HepG2 (cell line): ENCODE measurements at regions of chr11 and their contacts with region 1.

Region 1: GRCh38 chr11:73965076-73965860 is 14.4 kb downstream of the DNAJB13 start:
- DNase-seq: no peak
- ATAC-seq: no peak
- H3K4me3 ChIP-seq: no peak overlapping the region
- H3K27ac ChIP-seq: no peak overlapping the region
- H3K4me1 ChIP-seq: peaks cover 20% of the 10 kb centered on the region
- H3K27me3 ChIP-seq: no peaks in the 10 kb centered on the region
- CTCF ChIP-seq: no peak
- EP300 ChIP-seq: no peak
- POLR2A ChIP-seq: no peak
- RAD21 ChIP-seq: no peak

Region 2: GRCh38 chr11:74004759-74005615 is 39.7 kb after region 1 on chr11:
- CTCF ChIA-PET with region 1: no interaction called
- POLR2A ChIA-PET with region 1: no interaction called
- in situ Hi-C with region 1: no loop called
- intact Hi-C with region 1: no loop called
- DNase-seq: no peak
- ATAC-seq: peak; percentile 43
- H3K4me3 ChIP-seq: no peak overlapping the region
- H3K27ac ChIP-seq: no peak overlapping the region
- H3K4me1 ChIP-seq: peaks cover 48% of the 10 kb centered on the region
- H3K27me3 ChIP-seq: no peaks in the 10 kb centered on the region
- CTCF ChIP-seq: no peak
- EP300 ChIP-seq: no peak
- POLR2A ChIP-seq: no peak
- RAD21 ChIP-seq: no peak

Region 3: GRCh38 chr11:74090701-74091100 is 125.4 kb after region 1 on chr11:
- CTCF ChIA-PET with region 1: interaction called, 3 read pairs
- POLR2A ChIA-PET with region 1: no interaction called
- in situ Hi-C with region 1: loop called (anchors 10 kb)
- intact Hi-C with region 1: loop called (anchors 1 kb)
- DNase-seq: peak; percentile 12
- ATAC-seq: peak; percentile 53; the same call in 2 of the 3 replicates
- H3K4me3 ChIP-seq: no peak overlapping the region
- H3K27ac ChIP-seq: no peak overlapping the region
- H3K4me1 ChIP-seq: peaks cover 5% of the 10 kb centered on the region
- H3K27me3 ChIP-seq: no peaks in the 10 kb centered on the region
- CTCF ChIP-seq: peak; percentile 67
- EP300 ChIP-seq: no peak
- POLR2A ChIP-seq: no peak
- RAD21 ChIP-seq: no peak

Region 4: DNA sequence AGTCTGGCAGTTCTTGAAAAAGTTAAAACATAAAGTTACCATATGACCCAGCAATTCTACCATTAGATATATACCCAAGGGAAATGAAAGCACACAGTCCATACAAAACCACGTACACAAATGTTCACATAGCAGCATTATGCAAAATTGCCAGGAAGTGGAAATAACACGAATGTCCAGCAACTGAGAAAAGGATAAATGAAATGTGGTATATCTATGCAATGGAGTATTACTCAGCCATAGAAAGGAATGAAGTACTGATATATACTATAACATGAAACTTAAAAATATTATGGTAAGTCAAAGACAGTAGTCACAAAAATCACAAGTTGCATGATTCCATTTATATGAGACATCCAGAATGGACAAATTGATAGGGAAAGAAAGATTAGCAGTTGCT is 147.6 kb after region 1 on chr11:
- CTCF ChIA-PET with region 1: no interaction called
- POLR2A ChIA-PET with region 1: no interaction called
- in situ Hi-C with region 1: no loop called
- intact Hi-C with region 1: no loop called
- DNase-seq: no peak
- ATAC-seq: no peak
- H3K4me3 ChIP-seq: no peak overlapping the region
- H3K27ac ChIP-seq: no peak overlapping the region
- H3K4me1 ChIP-seq: no peaks in the 10 kb centered on the region
- H3K27me3 ChIP-seq: no peaks in the 10 kb centered on the region
- CTCF ChIP-seq: no peak
- EP300 ChIP-seq: no peak
- POLR2A ChIP-seq: no peak
- RAD21 ChIP-seq: no peak

Region 5: GRCh38 chr11:74138572-74138971 is 173.3 kb after region 1 on chr11:
- CTCF ChIA-PET with region 1: no interaction called
- POLR2A ChIA-PET with region 1: no interaction called
- in situ Hi-C with region 1: no loop called
- intact Hi-C with region 1: loop called (anchors 1 kb)
- DNase-seq: peak; percentile 93
- ATAC-seq: peak; percentile 97
- H3K4me3 ChIP-seq: no peak overlapping the region; a peak in 1 of 6 replicates
- H3K27ac ChIP-seq: peak overlapping the region; percentile 59
- H3K4me1 ChIP-seq: peaks cover 32% of the 10 kb centered on the region
- H3K27me3 ChIP-seq: no peaks in the 10 kb centered on the region
- CTCF ChIP-seq: no peak
- EP300 ChIP-seq: peak in 1 of 2 experiments; percentile 47; a peak in 2 of 4 replicates
- POLR2A ChIP-seq: 0 out of 4 replicates have a peak, but pooled peaks of 1 of the 2 experiments have one; percentile 31
- RAD21 ChIP-seq: no peak

Region 6: DNA sequence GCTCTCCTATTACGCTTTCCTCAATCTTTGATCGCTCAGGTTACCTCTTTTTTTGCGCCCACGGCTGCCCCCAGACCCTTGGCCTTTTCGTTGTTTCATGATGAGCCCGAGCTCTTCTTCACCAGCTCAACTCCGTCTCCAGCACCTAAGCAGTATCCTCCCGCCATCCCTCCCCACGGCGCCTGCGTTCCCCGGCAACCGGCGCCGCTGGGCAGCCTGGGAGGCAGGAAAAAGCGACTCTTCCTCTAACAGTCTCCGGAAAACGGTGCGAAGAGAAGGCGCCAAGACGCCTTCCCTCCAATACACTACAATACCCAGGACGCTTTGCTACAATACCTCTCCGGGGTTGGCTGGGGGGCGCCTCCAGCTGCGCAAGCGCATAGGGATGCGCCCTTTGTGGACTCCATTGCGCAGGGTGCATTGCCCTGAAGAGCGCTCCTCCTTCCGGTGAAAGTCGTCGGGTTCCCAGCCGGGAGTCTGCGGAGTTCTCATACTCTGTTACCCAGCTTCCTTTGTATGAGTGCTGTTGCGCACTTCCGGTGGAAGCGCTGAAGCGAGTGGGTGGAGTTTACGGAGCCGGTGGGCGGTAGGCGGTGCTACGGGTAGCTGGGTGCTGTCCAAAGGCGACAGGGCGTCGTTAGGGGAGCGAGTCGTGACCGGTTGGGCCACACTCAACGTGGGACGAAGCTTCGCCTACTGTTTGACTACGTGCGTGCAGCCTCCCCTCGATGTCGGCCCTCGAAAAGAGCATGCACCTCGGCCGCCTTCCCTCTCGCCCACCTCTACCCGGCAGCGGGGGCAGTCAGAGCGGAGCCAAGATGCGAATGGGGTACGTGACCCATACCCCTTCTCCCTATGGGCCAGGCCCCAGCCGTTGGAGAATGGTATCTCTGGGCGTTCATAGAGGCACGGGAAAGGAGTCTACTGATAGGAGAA is 205.7 kb after region 1 on chr11 and contains the starts of genes C2CD3 and PPME1:
- CTCF ChIA-PET with region 1: no interaction called
- POLR2A ChIA-PET with region 1: no interaction called
- in situ Hi-C with region 1: loop called (anchors 25 kb)
- intact Hi-C with region 1: loop called (anchors 5 kb)
- DNase-seq: peak; percentile 99
- ATAC-seq: peak; percentile 96
- H3K4me3 ChIP-seq: peak within 1 kb of the TSS; percentile 81 to 86 (median 82)
- H3K27ac ChIP-seq: peak within 1 kb of the TSS; percentile 75
- H3K4me1 ChIP-seq: peaks cover 49% of the 10 kb centered on the region
- H3K27me3 ChIP-seq: no peaks in the 10 kb centered on the region; a peak in 1 of 5 replicates
- CTCF ChIP-seq: peak; percentile 67
- EP300 ChIP-seq: peak in 1 of 2 experiments; percentile 19; a peak in 1 of 4 replicates
- POLR2A ChIP-seq: peak; percentile 88 to 98
- RAD21 ChIP-seq: no peak
- total RNA-seq, gene C2CD3: 6.4 and 8.0 TPM in 2 replicates
- total RNA-seq, gene PPME1: 31.3 TPM in 2 replicates

Region 7: DNA sequence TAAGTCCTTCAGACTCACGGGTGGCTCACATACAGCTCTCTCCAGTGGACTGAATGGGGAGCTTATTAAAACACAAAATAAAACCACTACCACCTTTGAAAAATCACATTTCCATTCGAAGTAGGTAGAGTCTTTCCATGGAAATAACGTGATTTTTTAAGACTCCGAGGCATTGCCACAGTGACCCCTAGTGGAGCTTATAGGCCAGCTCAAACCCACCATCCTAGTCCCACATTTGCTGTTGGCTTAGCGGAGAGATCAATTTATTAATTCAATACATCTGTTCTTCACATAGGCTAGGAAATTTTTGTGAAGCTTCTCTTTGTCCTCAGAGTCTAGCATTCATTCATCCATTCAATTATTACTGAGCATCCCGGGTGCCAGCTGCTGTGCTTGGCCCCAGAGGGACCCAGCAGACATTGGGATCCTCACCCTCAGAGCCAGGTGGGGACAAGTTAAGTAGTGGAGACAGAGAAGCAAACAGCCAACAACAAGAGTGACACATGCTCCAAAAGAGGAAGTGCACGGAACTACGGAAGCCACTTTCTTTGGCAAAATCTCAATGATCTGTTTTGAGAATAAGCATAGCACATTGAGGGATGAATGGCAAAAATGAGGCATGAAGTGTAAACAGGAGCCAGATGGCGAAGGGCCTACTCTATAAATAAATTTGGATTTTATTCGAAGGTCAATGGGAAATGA is 356.4 kb after region 1 on chr11:
- CTCF ChIA-PET with region 1: no interaction called
- POLR2A ChIA-PET with region 1: no interaction called
- in situ Hi-C with region 1: no loop called
- intact Hi-C with region 1: loop called (anchors 2 kb)
- DNase-seq: peak; percentile 12
- ATAC-seq: peak; percentile 47
- H3K4me3 ChIP-seq: no peak overlapping the region
- H3K27ac ChIP-seq: no peak overlapping the region
- H3K4me1 ChIP-seq: no peaks in the 10 kb centered on the region
- H3K27me3 ChIP-seq: peaks cover 0 to 9% of the 10 kb centered on the region in 2 experiments; a peak in 3 of 5 replicates
- CTCF ChIP-seq: peak; percentile 64
- EP300 ChIP-seq: no peak
- POLR2A ChIP-seq: no peak
- RAD21 ChIP-seq: no peak